ENCODE measurements at regions of chr12 and their contacts with region 1.

Region 1: DNA sequence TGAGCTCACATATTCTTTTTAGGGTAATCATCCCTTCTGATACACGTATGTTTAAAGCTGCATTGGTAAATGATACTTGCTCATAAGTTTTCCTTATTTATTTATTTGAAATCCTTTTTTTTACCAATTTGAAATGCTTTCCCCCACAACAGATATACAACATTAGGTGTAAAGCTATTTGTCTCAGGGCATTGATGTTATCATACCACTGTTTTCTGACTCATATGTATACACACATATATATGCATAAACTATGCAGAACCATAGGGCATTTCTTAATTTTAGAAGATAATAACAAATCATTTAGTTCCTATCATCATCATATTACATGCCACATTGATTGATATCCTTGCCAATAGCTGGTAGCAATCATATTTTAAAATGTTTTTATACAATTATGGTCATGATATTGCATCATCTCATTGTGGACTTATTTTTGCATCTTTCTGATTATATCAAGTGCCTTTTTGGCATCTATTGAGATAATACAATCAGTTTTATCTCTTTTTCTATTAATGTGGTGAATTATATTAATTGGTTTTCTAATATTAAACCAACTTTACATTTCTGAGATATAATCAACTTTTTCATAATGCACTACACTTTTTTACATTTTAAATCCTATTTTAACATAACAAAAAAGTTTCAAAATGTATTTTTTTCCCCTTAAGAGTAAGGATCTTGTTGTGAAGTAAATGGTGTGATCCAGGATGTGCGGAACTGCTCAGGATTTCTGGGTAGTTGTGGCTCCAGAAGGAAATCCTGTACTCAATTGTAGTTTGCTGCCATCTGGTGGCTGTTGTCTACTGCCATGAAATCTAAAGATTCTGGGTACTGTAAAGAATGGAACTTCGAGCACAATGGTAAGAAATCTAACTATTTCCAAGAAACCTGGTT is 16.7 kb downstream of the OR9K2 start:
- DNase-seq: peak; percentile 70
- H3K4me3 ChIP-seq: no peak overlapping the region
- H3K27ac ChIP-seq: no peak overlapping the region
- H3K4me1 ChIP-seq: no peaks in the 10 kb centered on the region
- H3K27me3 ChIP-seq: peaks cover 9% of the 10 kb centered on the region
- CTCF ChIP-seq: peak; percentile 83

Region 2: GRCh38 chr12:54749191-54749818 is 393.6 kb before region 1 on chr12:
- CTCF ChIA-PET with region 1: no interaction called
- POLR2A ChIA-PET with region 1: no interaction called
- intact Hi-C with region 1: loop called (anchors 10 kb)
- DNase-seq: peak; percentile 71
- H3K4me3 ChIP-seq: no peak overlapping the region
- H3K27ac ChIP-seq: no peak overlapping the region
- H3K4me1 ChIP-seq: no peaks in the 10 kb centered on the region
- H3K27me3 ChIP-seq: peaks cover 4% of the 10 kb centered on the region
- CTCF ChIP-seq: peak; percentile 92

Region 3: GRCh38 chr12:54993161-54993835 is 149.6 kb before region 1 on chr12:
- CTCF ChIA-PET with region 1: interaction called, 6 read pairs
- POLR2A ChIA-PET with region 1: no interaction called
- intact Hi-C with region 1: loop called (anchors 1 kb)
- DNase-seq: peak; percentile 76
- H3K4me3 ChIP-seq: no peak overlapping the region
- H3K27ac ChIP-seq: no peak overlapping the region
- H3K4me1 ChIP-seq: no peaks in the 10 kb centered on the region
- H3K27me3 ChIP-seq: no peaks in the 10 kb centered on the region
- CTCF ChIP-seq: peak; percentile 82

Region 4: DNA sequence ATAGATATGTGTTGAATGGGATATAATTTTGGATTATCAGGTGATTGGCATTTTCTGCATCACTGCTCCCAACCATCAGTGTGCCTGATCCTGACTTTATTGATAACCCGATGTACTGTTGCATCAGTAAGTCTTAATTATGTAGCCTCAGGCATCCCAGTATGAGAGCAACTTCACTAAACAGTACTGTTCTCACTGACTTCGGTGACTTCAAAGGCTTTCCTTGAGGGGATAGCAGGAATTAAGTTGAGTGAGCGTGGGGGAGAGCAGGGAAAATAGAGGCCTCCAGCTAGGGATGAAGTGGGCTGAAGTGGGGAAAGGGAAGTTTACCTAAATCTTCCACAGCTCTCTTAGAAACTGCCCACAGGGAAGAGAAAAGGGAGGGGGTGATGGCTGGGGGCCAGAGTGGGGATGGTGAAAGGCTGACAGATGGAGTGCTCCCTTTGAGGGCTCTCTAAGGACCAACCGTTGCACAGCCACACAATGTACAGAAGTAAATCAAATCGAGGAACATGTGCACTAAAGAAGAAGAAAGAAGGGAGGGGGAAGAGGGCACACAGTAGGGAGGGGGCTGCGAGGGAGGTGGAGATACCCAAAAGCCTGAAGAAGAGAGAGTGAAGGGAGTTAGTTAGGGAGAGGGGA is 133.9 kb before region 1 on chr12:
- CTCF ChIA-PET with region 1: no interaction called
- POLR2A ChIA-PET with region 1: no interaction called
- intact Hi-C with region 1: no loop called
- DNase-seq: no peak
- H3K4me3 ChIP-seq: no peak overlapping the region
- H3K27ac ChIP-seq: no peak overlapping the region
- H3K4me1 ChIP-seq: no peaks in the 10 kb centered on the region
- H3K27me3 ChIP-seq: peaks cover 30% of the 10 kb centered on the region
- CTCF ChIP-seq: no peak

Region 5: DNA sequence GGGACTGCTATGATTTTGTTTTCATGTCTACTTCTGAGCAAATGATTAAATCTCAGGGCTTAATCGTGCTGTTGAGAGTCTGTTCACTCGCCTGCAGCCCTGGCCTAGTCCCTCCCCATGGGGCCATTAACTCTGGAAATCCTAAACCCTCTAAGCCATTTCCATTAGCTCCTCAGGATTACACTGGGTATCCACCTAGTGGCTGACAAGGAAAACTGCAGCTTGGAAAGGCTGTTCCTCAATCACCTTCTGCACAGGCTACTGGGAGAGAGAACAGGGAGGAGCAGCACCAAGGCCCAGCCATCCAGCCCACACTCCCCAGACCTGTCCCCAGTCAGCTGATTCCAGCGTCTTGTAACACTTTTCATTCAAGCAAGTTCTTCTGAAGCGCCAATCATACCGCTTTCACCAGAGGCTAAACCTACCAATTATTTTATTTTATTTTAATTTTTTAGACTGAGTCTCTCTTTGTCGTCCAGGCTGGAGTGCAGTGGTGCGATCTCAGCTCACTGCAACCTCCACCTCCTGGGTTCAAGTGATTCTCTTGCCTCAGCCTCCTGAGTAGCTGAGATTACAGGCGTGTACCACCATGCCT is 74.4 kb before region 1 on chr12:
- CTCF ChIA-PET with region 1: no interaction called
- POLR2A ChIA-PET with region 1: no interaction called
- intact Hi-C with region 1: no loop called
- DNase-seq: peak; percentile 90
- H3K4me3 ChIP-seq: no peak overlapping the region
- H3K27ac ChIP-seq: no peak overlapping the region
- H3K4me1 ChIP-seq: peaks cover 5% of the 10 kb centered on the region
- H3K27me3 ChIP-seq: no peaks in the 10 kb centered on the region
- CTCF ChIP-seq: peak; percentile 84

Measured in A673 (cell line).